HCT116 (cell line): ENCODE measurements at regions of chr17 and their contacts with region 1.

Region 1: GRCh38 chr17:62968445-62968923 is 2.4 kb downstream of the TANC2 start:
- DNase-seq: peak; percentile 83
- ATAC-seq: peak; percentile 63
- H3K4me3 ChIP-seq: peak overlapping the region in 1 of 2 experiments; percentile 18; a peak in 1 of 4 replicates
- H3K27ac ChIP-seq: no peak overlapping the region
- H3K4me1 ChIP-seq: peaks cover 13 to 38% of the 10 kb centered on the region in 2 experiments
- H3K27me3 ChIP-seq: no peaks in the 10 kb centered on the region
- CTCF ChIP-seq: peak; percentile 97 to 100 (median 99)
- POLR2A ChIP-seq: no peak
- RAD21 ChIP-seq: peak; percentile 99

Region 2: DNA sequence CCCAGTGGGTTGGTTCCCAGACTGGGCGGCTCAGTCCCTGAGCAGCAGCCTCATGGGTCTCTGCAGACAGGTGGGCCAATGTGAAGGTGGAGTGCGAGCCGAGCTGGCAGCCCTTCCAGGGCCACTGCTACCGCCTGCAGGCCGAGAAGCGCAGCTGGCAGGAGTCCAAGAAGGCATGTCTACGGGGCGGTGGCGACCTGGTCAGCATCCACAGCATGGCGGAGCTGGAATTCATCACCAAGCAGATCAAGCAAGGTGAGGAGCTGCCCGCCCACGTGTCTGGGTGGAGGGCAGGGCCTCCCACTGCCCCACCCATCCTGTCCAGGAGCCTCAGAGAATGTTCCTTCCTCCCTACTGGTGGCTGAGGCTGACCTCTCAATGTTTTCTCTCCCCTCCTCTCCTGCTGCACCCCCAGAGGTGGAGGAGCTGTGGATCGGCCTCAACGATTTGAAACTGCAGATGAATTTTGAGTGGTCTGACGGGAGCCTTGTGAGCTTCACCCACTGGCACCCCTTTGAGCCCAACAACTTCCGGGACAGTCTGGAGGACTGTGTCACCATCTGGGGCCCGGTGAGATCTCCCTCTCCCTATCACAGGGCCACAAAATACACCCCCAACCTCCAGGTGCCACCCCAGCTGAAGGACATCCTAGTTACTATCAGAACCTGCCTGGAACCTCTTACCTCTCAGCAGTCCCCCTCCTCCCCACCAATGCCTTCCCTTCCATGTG is 296.7 kb before region 1 on chr17:
- CTCF ChIA-PET with region 1: no interaction called
- POLR2A ChIA-PET with region 1: no interaction called
- RAD21 ChIA-PET with region 1: interaction called in 1 of 2 experiments, 3 read pairs
- intact Hi-C with region 1: loop called (anchors 1 kb)
- DNase-seq: no peak
- ATAC-seq: peak; percentile 39
- H3K4me3 ChIP-seq: no peak overlapping the region
- H3K27ac ChIP-seq: no peak overlapping the region; the same call in 1 of the 2 replicates
- H3K4me1 ChIP-seq: peaks cover 9 to 14% of the 10 kb centered on the region in 2 experiments; a peak in 3 of 4 replicates
- H3K27me3 ChIP-seq: no peaks in the 10 kb centered on the region
- CTCF ChIP-seq: no peak
- POLR2A ChIP-seq: no peak
- RAD21 ChIP-seq: no peak

Region 3: GRCh38 chr17:62778689-62779681 is 189.5 kb before region 1 on chr17:
- CTCF ChIA-PET with region 1: no interaction called
- POLR2A ChIA-PET with region 1: no interaction called
- RAD21 ChIA-PET with region 1: no interaction called
- intact Hi-C with region 1: loop called (anchors 2 kb)
- DNase-seq: peak; percentile 88
- ATAC-seq: peak; percentile 96
- H3K4me3 ChIP-seq: peak overlapping the region in 1 of 2 experiments; percentile 11; a peak in 2 of 4 replicates
- H3K27ac ChIP-seq: no peak overlapping the region
- H3K4me1 ChIP-seq: peaks cover 11 to 16% of the 10 kb centered on the region in 2 experiments
- H3K27me3 ChIP-seq: no peaks in the 10 kb centered on the region
- CTCF ChIP-seq: no peak
- POLR2A ChIP-seq: peak; percentile 37
- RAD21 ChIP-seq: no peak